ENCODE measurements at regions of chr10 and their contacts with region 1.

Region 1: DNA sequence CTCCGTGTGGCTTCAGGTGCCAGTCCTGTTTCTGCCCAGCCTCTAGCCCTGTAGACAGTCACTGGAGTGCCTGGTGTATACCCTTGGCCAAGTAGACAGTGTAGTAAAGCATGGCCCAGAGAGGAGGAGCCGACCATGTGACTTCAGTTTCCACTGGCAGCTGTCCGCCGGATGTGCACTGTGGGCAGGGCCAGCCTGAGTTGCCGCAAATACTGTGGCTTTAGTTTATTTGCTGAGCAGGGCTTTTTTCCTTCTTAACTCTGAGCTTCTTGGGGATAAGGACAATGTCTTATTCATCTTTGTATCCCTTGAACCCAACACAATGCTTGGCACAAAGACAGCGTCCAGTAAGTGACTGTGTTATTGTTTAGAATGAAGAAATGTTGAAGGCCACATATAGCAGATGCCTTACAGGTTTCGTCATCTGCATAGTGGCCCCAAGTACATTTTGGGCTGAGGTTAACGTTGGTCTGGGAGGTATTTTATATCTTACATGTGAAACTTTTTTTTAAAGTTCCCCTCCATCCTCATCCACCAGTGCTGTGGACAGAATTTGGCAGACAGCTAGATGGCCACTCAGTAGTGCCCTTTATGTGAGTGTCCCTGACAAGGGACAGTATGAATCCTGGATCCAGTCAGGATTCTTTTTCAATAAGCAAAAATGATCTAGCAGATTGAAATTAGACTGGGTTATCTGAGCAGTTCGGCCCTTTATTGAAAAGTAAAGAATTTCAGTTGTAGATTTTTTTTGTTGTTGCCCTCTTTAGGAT is 40.6 kb downstream of the CYP17A1 start:
- DNase-seq: peak; percentile 89 to 94
- ATAC-seq: peak; percentile 83 to 93 (median 88)
- H3K4me3 ChIP-seq: peak overlapping the region; percentile 43
- H3K27ac ChIP-seq: peak overlapping the region; percentile 87
- H3K4me1 ChIP-seq: peaks cover 79% of the 10 kb centered on the region
- H3K27me3 ChIP-seq: no peaks in the 10 kb centered on the region
- CTCF ChIP-seq: no peak

Region 2: GRCh38 chr10:102776779-102777456 is 19.7 kb before region 1 on chr10:
- intact Hi-C with region 1: loop called (anchors 2 kb)
- DNase-seq: peak; percentile 85 to 92
- ATAC-seq: peak; percentile 71 to 81 (median 74)
- H3K4me3 ChIP-seq: peak overlapping the region; percentile 81
- H3K27ac ChIP-seq: peak overlapping the region; percentile 98
- H3K4me1 ChIP-seq: peaks cover 77% of the 10 kb centered on the region
- H3K27me3 ChIP-seq: no peaks in the 10 kb centered on the region
- CTCF ChIP-seq: no peak

Region 3: DNA sequence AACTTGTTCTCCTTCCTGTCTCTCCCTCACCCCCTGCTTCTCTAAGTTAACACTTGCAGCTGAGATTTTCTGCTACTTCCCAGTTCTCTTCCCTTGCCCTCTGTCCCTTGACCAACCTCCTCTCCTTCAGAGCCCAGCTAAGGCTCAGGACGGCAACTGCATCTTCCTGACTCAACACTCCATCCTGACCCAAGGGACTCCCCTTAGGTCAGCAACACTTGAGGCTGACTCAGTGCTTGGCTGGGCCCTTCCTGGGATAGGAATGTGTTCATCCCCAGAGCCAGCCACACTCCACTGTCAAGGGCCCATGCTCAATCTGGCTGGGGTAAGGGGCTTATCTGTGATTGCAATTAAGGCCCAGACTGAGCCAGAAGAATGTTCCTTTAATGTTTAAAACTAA is 652.2 kb after region 1 on chr10:
- intact Hi-C with region 1: loop called in 1 of 2 experiments (anchors 5 kb)
- DNase-seq: peak; percentile 82 to 83
- ATAC-seq: peak; percentile 41 to 52 (median 45)
- H3K4me3 ChIP-seq: peak overlapping the region; percentile 74
- H3K27ac ChIP-seq: peak overlapping the region; percentile 18
- H3K4me1 ChIP-seq: peaks cover 26% of the 10 kb centered on the region
- H3K27me3 ChIP-seq: peaks cover 0 to 7% (median 0%) of the 10 kb centered on the region in 3 donors
- CTCF ChIP-seq: no peak

Measured in psoas muscle (tissue), 8 donors.